Keratinocyte (primary cell): ENCODE measurements at regions of chr7 and their contacts with region 1.

Region 1: GRCh38 chr7:139560678-139561077 is 37.2 kb downstream of the CLEC2L start:
- DNase-seq: no peak
- H3K4me3 ChIP-seq: no peak overlapping the region
- H3K27ac ChIP-seq: no peak overlapping the region
- H3K4me1 ChIP-seq: no peaks in the 10 kb centered on the region
- H3K27me3 ChIP-seq: peaks cover 5% of the 10 kb centered on the region
- CTCF ChIP-seq: no peak

Region 2: GRCh38 chr7:139328375-139328774 is 232.3 kb before region 1 on chr7:
- dilution Hi-C with region 1: no loop called
- DNase-seq: peak; percentile 17
- H3K4me3 ChIP-seq: no peak overlapping the region
- H3K27ac ChIP-seq: no peak overlapping the region
- H3K4me1 ChIP-seq: no peaks in the 10 kb centered on the region
- H3K27me3 ChIP-seq: no peaks in the 10 kb centered on the region
- CTCF ChIP-seq: no peak

Region 3: GRCh38 chr7:139494835-139495579 is 65.7 kb before region 1 on chr7:
- dilution Hi-C with region 1: loop called (anchors 10 kb)
- DNase-seq: no peak
- H3K4me3 ChIP-seq: no peak overlapping the region
- H3K27ac ChIP-seq: no peak overlapping the region
- H3K4me1 ChIP-seq: no peaks in the 10 kb centered on the region
- H3K27me3 ChIP-seq: peaks cover 5% of the 10 kb centered on the region
- CTCF ChIP-seq: no peak